Activated CD8-positive, alpha-beta T cell treated with anti-CD3 and anti-CD28 coated beads for 36 hours (primary cell): ENCODE measurements at regions of chr3 and their contacts with region 1.

Region 1: DNA sequence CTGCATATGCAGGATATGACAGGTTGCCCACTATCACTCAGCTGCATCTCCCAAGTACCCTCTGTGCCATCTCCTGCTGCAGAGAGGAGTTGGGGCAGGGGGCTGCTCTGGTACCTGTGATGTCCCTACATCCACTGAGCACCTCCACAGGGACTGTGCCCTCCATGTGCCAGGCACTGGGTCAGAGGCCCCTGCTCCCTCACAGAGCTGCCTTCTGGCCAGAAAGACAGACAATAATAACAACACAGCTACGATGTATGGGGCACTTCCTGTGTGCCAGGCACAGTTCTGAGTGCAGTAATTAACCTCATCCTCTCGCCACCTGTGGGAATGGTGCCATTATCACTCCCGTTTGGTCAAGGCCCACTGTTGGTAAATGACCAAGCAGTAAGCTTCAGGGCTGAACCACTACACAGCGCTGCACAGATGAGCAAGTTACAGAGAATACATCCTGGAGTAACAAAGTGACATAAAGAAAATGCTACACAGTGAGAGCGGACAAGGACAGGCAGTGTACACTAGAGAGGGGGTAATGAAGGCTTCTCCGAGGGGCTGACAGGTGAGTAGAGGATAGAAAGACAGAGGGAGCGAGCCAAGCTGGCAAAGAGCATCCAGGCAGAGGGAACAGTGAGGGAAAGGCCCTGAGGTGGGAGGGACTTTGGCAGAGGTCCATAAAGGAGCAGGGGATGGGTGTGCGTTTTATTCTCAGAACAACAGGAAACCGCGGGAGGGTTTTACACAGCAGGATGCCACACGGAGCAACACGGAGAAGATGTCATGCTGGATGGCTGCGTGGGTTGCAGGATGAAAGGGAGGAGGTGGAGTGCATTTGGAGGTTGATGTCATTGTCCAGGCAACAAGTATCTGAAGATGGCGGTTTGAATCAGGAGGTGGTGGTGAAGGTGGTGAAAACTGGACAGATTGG is 13.6 kb downstream of the WNT7A start:
- DNase-seq: peak; percentile 83
- ATAC-seq: peak; percentile 88
- H3K4me3 Mint-ChIP-seq: peak overlapping the region; percentile 4
- H3K27ac Mint-ChIP-seq: peak overlapping the region; percentile 85
- H3K4me1 Mint-ChIP-seq: peaks cover 35% of the 10 kb centered on the region
- H3K27me3 Mint-ChIP-seq: no peaks in the 10 kb centered on the region
- CTCF ChIP-seq: no peak

Region 2: GRCh38 chr3:13657660-13658435 is 208.5 kb before region 1 on chr3:
- CTCF ChIA-PET with region 1: interaction called, 11 read pairs
- POLR2A ChIA-PET with region 1: no interaction called
- intact Hi-C with region 1: no loop called
- DNase-seq: peak; percentile 71
- ATAC-seq: peak; percentile 78
- H3K4me3 Mint-ChIP-seq: no peak overlapping the region
- H3K27ac Mint-ChIP-seq: no peak overlapping the region
- H3K4me1 Mint-ChIP-seq: peaks cover 18% of the 10 kb centered on the region
- H3K27me3 Mint-ChIP-seq: peaks cover 11% of the 10 kb centered on the region
- CTCF ChIP-seq: peak; percentile 62

Region 3: DNA sequence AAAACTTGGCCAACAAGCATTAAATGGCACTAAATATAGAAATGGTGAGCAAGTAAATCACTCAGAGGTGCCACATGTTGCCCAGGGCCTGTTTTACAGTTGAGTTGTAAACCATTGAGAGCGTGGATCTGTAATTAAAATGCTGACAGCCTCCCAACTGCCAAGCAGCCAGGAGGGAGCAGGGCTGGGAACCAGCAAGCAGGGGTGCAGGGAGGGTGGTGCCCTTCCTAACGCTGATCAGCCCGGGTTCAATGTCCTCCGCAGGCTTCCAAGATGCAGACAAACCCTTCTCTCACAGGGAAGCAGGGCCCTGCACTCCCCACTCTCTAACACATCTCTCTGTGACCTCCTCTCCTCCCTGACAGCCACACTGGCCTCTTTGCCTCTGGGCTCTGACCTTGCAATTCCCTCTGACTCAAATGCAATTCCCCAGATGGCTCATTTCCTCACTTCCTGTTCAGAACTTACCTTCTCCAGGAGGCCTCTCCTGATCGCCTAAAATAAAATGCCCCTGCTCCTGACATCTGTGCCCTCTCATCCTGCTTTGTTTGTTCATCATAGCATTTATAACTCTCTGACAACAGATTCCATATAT is 26.5 kb before region 1 on chr3:
- CTCF ChIA-PET with region 1: no interaction called
- POLR2A ChIA-PET with region 1: no interaction called
- intact Hi-C with region 1: no loop called
- DNase-seq: no peak
- ATAC-seq: no peak
- H3K4me3 Mint-ChIP-seq: no peak overlapping the region
- H3K27ac Mint-ChIP-seq: no peak overlapping the region
- H3K4me1 Mint-ChIP-seq: no peaks in the 10 kb centered on the region
- H3K27me3 Mint-ChIP-seq: peaks cover under 1% of the 10 kb centered on the region
- CTCF ChIP-seq: no peak

Region 4: DNA sequence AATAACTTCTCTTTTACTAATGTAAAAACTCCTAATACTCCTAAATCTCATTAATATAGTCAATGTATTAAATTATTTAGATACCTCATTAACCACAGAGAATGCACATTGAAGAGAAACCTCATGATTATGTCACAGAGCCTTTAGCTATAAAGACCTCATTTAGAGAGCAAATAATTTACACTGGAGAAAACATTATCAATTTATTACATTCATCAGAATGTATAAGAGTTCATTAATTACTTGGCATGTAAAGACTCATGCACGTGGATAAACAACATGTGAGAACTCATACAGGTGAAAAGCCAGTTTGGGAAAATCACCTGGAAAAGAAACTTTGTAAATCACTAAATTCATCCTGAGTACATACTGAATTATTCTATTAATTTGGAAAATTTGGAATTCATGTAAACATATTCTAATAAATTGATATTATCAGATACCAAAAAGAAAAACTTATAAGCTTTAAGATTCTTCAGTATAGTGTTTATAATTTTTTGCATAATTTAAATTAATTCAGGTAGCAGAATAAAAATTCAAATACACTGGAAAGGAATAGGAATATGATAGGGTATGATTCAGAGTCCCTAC is 36.4 kb after region 1 on chr3:
- CTCF ChIA-PET with region 1: no interaction called
- POLR2A ChIA-PET with region 1: no interaction called
- intact Hi-C with region 1: no loop called
- DNase-seq: no peak
- ATAC-seq: no peak
- H3K4me3 Mint-ChIP-seq: no peak overlapping the region
- H3K27ac Mint-ChIP-seq: no peak overlapping the region
- H3K4me1 Mint-ChIP-seq: no peaks in the 10 kb centered on the region
- H3K27me3 Mint-ChIP-seq: no peaks in the 10 kb centered on the region
- CTCF ChIP-seq: no peak